CD4-positive, alpha-beta T cell (primary cell): ENCODE measurements at regions of chr17 and their contacts with region 1.

Region 1: DNA sequence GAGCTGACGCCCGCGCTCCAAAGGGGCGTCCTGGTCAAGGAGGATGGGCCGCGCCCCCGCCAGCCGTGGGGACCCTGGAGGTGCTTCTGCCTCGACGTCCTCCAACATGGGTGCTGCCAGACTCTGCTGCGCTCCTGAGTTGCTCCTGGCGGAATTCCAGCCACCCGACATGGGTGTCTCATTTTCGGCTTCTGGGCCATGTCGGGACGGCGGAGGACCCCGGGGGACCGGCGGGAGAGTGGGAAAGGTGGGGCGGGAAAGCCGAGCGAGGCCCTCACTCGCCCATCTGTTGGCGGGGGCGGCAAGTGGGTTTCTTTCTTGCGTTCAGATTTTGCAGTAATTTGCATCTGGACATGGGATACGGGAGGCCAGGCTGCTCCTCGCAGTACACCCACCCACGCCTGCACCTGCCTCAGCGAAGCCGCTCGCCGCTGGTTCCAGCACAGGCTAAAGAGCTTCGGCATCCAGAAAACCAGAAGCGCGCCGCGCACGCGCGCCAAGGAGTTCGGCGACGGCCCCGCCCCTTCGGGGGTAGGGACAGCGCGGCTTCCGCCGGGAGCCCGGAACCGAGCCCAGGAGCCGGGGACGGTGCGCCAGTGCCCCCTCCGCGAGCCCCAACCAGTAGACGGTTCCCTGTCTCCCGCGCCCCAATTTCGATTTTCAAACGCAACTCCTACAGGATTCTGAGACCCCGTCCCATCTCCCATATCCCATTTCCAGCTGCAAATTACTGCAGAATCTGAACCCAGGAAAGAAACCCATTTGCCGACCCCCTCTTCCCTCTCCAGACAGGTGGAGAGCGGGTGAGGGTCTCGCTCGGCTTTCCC is at the start of gene ARMC7:
- DNase-seq: peak; percentile 84 to 97 (median 90)
- ATAC-seq: peak; percentile 80
- H3K4me3 ChIP-seq: peak within 1 kb of the TSS; percentile 89
- H3K4me3 Mint-ChIP-seq: peak within 1 kb of the TSS; percentile 92
- H3K27ac ChIP-seq: peak within 1 kb of the TSS; percentile 29 to 59
- H3K27ac Mint-ChIP-seq: peak within 1 kb of the TSS; percentile 82
- H3K4me1 ChIP-seq: peaks cover 44% of the 10 kb centered on the region
- H3K4me1 Mint-ChIP-seq: peaks cover 32% of the 10 kb centered on the region
- H3K27me3 ChIP-seq: no peaks in the 10 kb centered on the region
- H3K27me3 Mint-ChIP-seq: no peaks in the 10 kb centered on the region
- CTCF ChIP-seq: no peak
- total RNA-seq, gene ARMC7: 4.1 to 4.8 TPM

Region 2: DNA sequence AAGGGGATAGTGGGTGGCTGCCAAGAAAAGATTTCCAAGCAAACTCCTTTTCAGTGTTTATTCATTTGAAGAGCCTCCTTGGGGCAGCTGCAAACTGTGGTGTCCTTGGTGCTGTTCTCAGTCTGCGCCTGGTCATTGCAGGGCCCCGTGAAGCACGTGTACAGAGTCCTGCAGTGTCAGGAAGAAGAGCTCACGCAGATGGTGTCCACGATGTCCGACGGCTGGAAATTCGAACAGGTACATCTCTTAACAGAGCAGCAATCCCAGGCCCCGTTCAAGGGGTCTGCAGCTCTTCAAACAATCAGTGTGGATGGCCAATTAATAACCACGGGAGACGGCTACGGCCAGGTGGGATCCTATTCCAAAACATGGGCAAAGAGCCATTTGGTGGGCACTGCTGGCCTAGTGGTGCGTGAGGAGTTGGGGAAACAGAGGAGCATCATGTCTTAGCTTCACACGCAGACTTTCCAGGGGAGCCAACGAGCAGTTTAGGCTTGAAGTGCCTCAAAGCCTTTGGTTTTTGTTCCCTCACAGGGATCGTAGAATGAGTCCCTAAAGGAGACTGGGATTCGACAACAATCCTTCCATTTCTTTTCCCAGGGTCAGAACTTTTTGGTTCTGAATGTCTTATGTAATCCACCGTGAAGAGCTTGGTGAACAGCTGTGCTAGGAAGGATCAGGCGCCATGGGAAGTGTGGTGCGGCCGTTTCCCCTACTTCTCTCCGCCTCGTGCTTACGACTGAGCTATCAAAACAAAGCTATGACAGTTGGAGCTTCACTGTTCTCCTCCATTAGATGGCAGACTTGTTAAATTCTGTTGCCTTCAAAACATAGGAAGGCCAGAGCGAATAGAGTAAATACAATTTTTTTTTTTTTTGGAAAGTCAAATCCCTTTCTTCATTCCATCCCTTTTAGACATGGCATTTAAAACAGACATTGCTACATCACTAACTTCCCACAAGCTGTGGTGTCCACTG is 50.0 kb before region 1 on chr17:
- CTCF ChIA-PET with region 1: interaction called, 4 read pairs
- POLR2A ChIA-PET with region 1: interaction called, 13 read pairs
- intact Hi-C with region 1: loop called (anchors 5 to 10 kb)
- DNase-seq: peak in 4 of 14 experiments; percentile 21 to 59 (median 48)
- ATAC-seq: peak; percentile 92
- H3K4me3 ChIP-seq: no peak overlapping the region
- H3K4me3 Mint-ChIP-seq: no peak overlapping the region
- H3K27ac ChIP-seq: no peak overlapping the region
- H3K27ac Mint-ChIP-seq: peak overlapping the region; percentile 61
- H3K4me1 ChIP-seq: peaks cover 6% of the 10 kb centered on the region
- H3K4me1 Mint-ChIP-seq: peaks cover 21% of the 10 kb centered on the region
- H3K27me3 ChIP-seq: no peaks in the 10 kb centered on the region
- H3K27me3 Mint-ChIP-seq: no peaks in the 10 kb centered on the region
- CTCF ChIP-seq: peak; percentile 39

Region 3: DNA sequence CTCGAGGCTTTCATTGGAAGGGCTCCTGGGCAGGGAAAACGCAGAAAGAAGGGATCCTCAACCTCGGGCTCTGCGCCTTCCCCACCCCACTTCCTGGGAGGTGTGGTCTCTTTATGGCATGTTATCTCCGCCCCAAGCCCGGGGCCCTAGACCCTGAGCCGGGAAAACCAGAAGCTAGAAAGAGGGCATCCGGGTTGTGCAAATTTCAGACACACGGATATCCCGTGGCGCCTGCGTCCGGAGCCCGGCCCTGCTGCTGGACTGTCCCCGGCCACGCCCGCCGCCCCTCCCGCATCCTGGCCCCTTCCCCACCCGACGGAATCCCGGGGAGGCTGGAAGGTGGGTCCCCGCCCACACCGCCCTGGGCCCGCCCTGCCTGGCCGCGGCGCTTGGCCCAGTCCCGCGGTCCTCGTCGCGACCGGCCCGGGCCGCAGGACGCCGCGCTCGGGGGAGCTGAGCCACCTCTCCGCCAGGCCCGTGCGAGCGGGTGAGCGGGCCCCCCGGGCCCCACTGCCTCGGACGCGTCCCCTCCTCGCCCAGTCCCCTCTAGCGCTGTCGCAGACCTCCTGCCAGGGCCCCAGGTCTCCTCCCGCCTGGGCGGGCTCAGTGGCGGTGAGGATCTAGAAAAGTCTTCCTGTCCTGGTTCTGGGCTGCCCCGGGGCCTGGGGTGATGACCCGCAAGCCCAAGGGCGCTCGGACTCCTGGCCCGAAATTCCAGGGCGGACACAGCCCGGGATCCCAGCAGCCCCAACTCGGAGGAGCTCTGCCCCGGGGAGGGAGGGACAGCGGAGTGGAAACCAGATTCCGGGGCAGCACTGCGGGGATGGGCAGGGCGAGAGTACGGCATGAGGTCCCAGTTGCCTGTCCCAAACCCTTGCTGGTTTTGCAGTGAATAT is 21.8 kb before region 1 on chr17 and contains the start of gene SLC16A5:
- CTCF ChIA-PET with region 1: no interaction called
- POLR2A ChIA-PET with region 1: interaction called, 14 read pairs
- intact Hi-C with region 1: no loop called
- DNase-seq: peak in 11 of 14 experiments; percentile 28 to 72 (median 53)
- ATAC-seq: peak; percentile 72
- H3K4me3 ChIP-seq: peak within 1 kb of the TSS; percentile 74
- H3K4me3 Mint-ChIP-seq: peak within 1 kb of the TSS; percentile 91
- H3K27ac ChIP-seq: peak within 1 kb of the TSS; percentile 41 to 53
- H3K27ac Mint-ChIP-seq: peak within 1 kb of the TSS; percentile 87
- H3K4me1 ChIP-seq: peaks cover 47% of the 10 kb centered on the region
- H3K4me1 Mint-ChIP-seq: peaks cover 63% of the 10 kb centered on the region
- H3K27me3 ChIP-seq: no peaks in the 10 kb centered on the region
- H3K27me3 Mint-ChIP-seq: no peaks in the 10 kb centered on the region
- CTCF ChIP-seq: no peak
- total RNA-seq, gene SLC16A5: 9.2 to 11.0 TPM

Region 4: DNA sequence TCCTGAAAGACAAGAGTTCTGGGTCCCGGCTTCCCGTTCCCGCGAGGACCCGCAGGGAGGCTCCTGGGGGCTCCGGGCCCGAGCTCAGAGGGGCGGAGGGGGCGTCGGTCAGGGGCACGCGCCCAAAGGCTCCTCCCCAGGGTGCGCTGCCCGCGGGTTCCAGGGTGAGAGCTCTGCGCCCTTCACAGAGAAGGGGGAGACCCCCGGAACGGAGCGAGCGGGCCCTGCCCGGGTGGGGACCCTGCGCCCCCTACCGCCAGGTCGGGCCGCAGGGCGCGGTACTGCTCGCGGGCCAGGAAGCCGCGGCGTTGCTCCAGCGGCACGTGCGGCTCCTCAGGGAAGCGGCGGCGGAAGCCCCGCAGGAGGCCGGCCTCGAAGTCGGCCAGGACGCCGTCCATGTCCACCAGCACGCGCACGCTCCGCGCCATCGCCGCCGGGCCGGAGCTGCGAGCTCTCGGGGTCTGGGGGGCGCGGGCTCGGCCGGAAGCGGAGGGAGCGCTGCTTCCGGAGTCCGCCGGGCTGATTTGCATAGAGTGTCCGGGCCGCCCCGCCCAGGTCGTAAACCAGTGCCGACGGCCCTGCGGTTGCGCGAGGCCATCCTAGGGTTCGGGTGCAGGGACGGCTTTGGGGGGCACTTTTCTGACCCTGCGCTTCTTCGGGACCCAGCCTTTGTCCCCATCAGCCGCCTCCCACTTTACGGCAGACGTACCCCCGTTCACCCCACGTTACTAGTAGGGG is 21.8 kb after region 1 on chr17 and contains the start of gene NT5C:
- CTCF ChIA-PET with region 1: interaction called, 97 read pairs
- POLR2A ChIA-PET with region 1: interaction called, 30 read pairs
- intact Hi-C with region 1: loop called (anchors 1 kb)
- DNase-seq: peak in 10 of 14 experiments; percentile 44 to 78 (median 56)
- ATAC-seq: peak; percentile 72
- H3K4me3 ChIP-seq: peak within 1 kb of the TSS; percentile 83
- H3K4me3 Mint-ChIP-seq: peak within 1 kb of the TSS; percentile 88
- H3K27ac ChIP-seq: peak within 1 kb of the TSS; percentile 45 to 55
- H3K27ac Mint-ChIP-seq: peak within 1 kb of the TSS; percentile 70
- H3K4me1 ChIP-seq: peaks cover 21% of the 10 kb centered on the region
- H3K4me1 Mint-ChIP-seq: peaks cover 7% of the 10 kb centered on the region
- H3K27me3 ChIP-seq: no peaks in the 10 kb centered on the region
- H3K27me3 Mint-ChIP-seq: no peaks in the 10 kb centered on the region
- CTCF ChIP-seq: peak; percentile 70
- total RNA-seq, gene NT5C: 14.1 to 16.1 TPM

Region 5: DNA sequence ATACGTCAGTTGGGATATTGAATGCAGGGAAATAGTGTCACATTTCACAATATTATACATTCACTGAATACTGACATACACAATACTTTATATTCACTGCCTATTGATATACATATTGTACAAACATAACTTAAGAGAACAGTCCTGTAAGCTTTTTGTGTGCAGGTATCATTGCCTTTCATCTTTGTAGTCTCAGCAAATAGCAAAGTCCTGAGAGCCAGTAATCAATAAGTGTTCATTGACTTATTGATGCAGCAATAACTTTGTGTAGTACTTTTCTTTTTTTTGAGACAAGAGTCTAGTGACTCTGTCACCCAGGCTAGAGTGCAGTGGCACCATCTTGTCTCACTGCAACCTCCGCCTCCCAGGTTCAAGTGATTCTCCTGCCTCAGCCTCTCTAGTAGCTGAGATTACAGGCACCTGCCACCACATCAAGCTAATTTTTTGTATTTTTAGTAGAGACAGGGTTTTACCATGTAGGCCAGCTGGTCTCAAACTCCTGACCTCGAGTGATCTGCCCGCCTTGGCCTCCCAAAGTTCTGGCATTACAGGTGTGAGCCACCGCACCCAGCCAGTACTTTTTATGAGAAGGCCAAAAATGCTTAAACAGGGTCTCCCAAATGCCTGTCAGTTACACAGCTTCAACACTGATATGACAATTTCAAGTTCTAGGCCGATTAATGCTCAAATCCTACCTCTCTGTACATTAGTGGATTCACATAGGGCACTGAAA is 90.4 kb after region 1 on chr17:
- CTCF ChIA-PET with region 1: interaction called, 102 read pairs
- POLR2A ChIA-PET with region 1: interaction called, 28 read pairs
- intact Hi-C with region 1: loop called (anchors 1 kb)
- DNase-seq: no peak
- ATAC-seq: no peak
- H3K4me3 ChIP-seq: no peak overlapping the region
- H3K4me3 Mint-ChIP-seq: no peak overlapping the region
- H3K27ac ChIP-seq: no peak overlapping the region
- H3K27ac Mint-ChIP-seq: no peak overlapping the region
- H3K4me1 ChIP-seq: peaks cover 8% of the 10 kb centered on the region
- H3K4me1 Mint-ChIP-seq: peaks cover 7% of the 10 kb centered on the region
- H3K27me3 ChIP-seq: no peaks in the 10 kb centered on the region
- H3K27me3 Mint-ChIP-seq: no peaks in the 10 kb centered on the region
- CTCF ChIP-seq: no peak

Region 6: DNA sequence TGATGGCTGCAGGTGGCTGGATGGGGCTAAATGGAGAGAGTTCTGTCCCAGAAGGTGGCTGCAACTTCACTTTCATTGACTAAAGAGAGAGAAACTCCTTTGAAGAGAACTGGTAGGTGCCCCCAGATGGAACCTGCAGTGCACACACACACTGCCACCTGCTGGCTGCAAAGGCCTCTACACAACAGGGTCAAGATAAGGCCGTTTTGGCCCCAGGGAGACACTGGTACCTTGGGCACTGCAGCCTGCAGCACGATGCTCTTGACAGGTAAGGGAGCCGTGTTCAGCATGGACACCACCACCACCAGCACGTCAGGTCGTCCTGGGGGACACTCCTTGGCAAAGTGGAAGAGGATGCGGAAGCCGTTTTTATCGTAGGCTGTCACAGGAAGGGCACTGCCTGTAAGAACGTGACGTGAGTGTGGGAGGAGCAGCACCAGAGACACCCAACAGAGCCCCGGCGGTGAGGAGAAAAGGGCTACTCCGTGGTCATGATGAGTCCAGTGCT is 129.1 kb after region 1 on chr17:
- CTCF ChIA-PET with region 1: interaction called, 7 read pairs
- POLR2A ChIA-PET with region 1: interaction called, 3 read pairs
- intact Hi-C with region 1: loop called (anchors 1 kb)
- DNase-seq: peak; percentile 45 to 82 (median 54)
- ATAC-seq: peak; percentile 52
- H3K4me3 ChIP-seq: no peak overlapping the region
- H3K4me3 Mint-ChIP-seq: peak overlapping the region; percentile 12
- H3K27ac ChIP-seq: peak overlapping the region in 1 of 2 donors; percentile 26
- H3K27ac Mint-ChIP-seq: peak overlapping the region; percentile 68
- H3K4me1 ChIP-seq: peaks cover 47% of the 10 kb centered on the region
- H3K4me1 Mint-ChIP-seq: peaks cover 18% of the 10 kb centered on the region
- H3K27me3 ChIP-seq: no peaks in the 10 kb centered on the region
- H3K27me3 Mint-ChIP-seq: no peaks in the 10 kb centered on the region
- CTCF ChIP-seq: peak; percentile 71

Region 7: DNA sequence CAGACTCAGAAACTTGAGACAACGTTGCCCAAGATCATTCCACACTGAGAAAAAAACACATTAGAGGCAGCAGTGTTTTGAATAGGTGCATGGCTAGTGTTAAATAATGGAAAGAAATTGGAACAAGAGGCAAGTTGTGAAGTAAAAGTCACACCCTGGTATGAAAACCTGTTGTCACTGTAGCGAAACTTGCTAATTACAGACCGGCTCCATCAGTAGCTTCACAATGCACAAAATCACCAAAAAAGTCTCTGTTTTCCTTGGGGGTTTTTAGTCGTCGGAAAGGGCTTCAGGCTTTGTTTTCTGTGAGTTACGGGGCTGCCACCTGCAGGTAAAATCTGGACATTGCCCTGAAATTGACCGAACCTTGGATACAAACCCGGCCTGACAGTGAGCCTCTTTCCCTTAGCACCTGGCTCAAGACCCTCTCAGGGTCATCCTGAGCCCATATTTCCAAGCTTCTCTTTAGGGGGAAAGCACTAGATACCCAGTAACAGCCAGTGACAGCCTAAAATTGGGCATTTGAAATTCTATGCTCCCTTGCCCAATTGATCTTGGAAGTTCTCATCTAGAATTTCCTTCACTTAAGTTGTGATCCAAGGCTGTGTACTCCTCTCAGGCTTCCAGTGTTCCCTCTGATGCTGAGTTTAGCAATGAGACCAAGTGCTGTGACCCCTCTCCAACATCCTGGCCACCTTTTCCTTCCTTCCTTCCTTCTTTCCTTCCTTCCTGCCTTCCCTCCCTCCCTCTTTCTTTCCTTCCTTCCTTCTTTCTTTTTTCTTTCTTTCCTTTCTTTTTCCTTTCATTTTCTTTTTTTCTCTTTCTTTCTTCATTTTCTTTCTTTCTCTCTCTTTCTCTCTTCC is 303.1 kb after region 1 on chr17:
- CTCF ChIA-PET with region 1: interaction called, 8 read pairs
- POLR2A ChIA-PET with region 1: interaction called, 7 read pairs
- intact Hi-C with region 1: loop called (anchors 1 kb)
- DNase-seq: peak; percentile 55 to 89 (median 66)
- ATAC-seq: peak; percentile 94
- H3K4me3 ChIP-seq: peak overlapping the region; percentile 11
- H3K4me3 Mint-ChIP-seq: peak overlapping the region; percentile 11
- H3K27ac ChIP-seq: no peak overlapping the region
- H3K27ac Mint-ChIP-seq: no peak overlapping the region
- H3K4me1 ChIP-seq: peaks cover 14% of the 10 kb centered on the region
- H3K4me1 Mint-ChIP-seq: peaks cover 16% of the 10 kb centered on the region
- H3K27me3 ChIP-seq: no peaks in the 10 kb centered on the region
- H3K27me3 Mint-ChIP-seq: no peaks in the 10 kb centered on the region
- CTCF ChIP-seq: peak; percentile 81